ENCODE measurements at regions of chr3 and their contacts with region 1.

Region 1: GRCh38 chr3:78666470-78666800 is 1101.4 kb downstream of the ROBO1 start:
- DNase-seq: no peak
- ATAC-seq: no peak
- H3K4me3 ChIP-seq: no peak overlapping the region
- H3K27ac ChIP-seq: no peak overlapping the region
- H3K4me1 ChIP-seq: no peaks in the 10 kb centered on the region
- H3K27me3 ChIP-seq: no peaks in the 10 kb centered on the region
- CTCF ChIP-seq: no peak
- POLR2A ChIP-seq: no peak

Region 2: DNA sequence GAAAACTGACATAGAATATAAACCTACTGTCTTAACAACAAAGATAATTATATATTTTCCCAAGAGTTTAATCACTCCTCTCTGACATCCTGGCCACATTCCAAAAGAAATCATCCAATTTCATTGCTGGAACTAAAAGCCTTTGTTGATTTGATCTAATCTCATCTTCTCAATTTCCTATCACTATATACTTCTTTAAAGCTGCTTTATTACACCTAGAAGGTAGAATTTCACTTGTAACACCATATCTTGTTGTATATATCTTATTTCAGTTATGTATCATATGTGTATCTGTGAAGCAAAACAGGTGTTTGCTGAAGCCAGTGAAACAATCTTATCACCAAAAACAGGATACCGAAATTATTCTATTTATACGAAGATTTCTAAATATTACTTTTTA is 361.2 kb after region 1 on chr3:
- in situ Hi-C with region 1: loop called in 3 of 4 experiments (anchors 5 to 10 kb)
- intact Hi-C with region 1: no loop called
- DNase-seq: no peak
- ATAC-seq: no peak
- H3K4me3 ChIP-seq: no peak overlapping the region
- H3K27ac ChIP-seq: no peak overlapping the region
- H3K4me1 ChIP-seq: no peaks in the 10 kb centered on the region
- H3K27me3 ChIP-seq: no peaks in the 10 kb centered on the region
- CTCF ChIP-seq: no peak
- POLR2A ChIP-seq: no peak

Measured in gastrocnemius medialis (tissue), 4 donors.